Common myeloid progenitor, CD34-positive (primary cell): ENCODE measurements at regions of chr3 and their contacts with region 1.

Region 1: DNA sequence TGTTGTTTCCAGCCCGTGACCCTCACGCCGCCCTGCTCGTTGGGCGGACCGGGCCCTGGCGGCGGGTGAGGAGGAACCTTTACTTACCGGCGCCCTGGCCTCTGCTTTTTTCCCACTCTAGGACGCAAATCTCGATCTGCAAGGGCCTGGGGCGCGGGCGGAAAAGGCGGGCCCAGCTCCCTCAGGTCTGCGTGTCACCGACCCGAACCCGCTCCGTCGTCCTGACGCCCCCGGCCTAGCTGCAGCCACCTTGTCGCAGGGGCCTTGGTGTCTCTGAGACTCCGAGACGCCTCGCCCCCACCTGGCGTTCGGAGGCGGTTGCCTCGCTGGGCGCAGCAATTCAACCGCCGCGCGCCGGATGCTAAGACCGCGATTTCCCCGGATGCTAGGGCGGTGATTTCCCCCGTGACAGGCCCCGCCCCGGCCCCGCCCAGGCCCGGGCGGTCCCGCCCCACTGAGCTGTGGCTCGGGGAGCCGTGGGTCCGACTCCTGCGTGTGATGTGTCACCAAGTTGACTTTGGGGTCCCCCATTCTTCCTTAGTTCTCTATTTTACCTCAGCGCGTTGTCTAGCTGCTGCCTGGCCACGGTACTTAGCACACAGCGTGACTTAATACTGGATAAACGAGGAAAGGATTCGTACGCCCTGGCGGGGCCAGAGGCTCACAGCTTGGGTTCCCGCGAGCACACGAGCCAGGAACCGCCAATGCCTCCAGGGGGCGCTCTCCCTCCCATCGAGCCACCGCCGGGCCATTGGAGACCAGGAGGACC is at the start of gene RPL39L:
- DNase-seq: peak; percentile 86 to 97 (median 95)
- H3K4me3 ChIP-seq: peak within 1 kb of the TSS; percentile 40 to 75 (median 68)
- H3K27ac ChIP-seq: peak within 1 kb of the TSS in 1 of 2 experiments; percentile 58
- H3K4me1 ChIP-seq: peaks cover 0 to 6% (median 4%) of the 10 kb centered on the region in 4 experiments
- H3K27me3 ChIP-seq: no peaks in the 10 kb centered on the region

Region 2: GRCh38 chr3:187016639-187017345 is 122.5 kb before region 1 on chr3:
- CTCF ChIA-PET with region 1: no interaction called
- POLR2A ChIA-PET with region 1: no interaction called
- DNase-seq: no peak
- H3K4me3 ChIP-seq: no peak overlapping the region
- H3K27ac ChIP-seq: no peak overlapping the region
- H3K4me1 ChIP-seq: peaks cover 8 to 22% (median 15%) of the 10 kb centered on the region in 4 experiments
- H3K27me3 ChIP-seq: no peaks in the 10 kb centered on the region

Region 3: DNA sequence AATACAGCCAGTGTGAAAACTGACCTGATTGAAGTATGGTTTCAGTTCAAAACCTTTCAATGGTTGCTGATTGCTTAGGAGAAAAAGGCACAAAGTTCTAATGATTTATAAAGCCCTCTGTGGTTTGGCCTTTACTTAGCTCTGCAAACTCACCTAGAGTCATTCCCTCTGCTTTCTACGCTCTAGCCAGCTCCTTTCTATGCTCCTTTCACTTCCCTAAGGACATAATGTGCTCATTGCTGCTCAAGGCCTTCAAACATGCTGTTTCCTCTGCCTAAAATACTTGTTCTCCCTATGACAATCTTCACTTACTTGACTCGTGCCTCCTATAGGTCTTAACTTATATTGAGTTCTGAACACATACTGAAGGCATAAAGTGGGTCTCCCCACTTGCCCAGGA is 19.0 kb before region 1 on chr3:
- CTCF ChIA-PET with region 1: interaction called, 39 read pairs
- POLR2A ChIA-PET with region 1: interaction called, 3 read pairs
- DNase-seq: no peak
- H3K4me3 ChIP-seq: no peak overlapping the region
- H3K27ac ChIP-seq: no peak overlapping the region
- H3K4me1 ChIP-seq: no peaks in the 10 kb centered on the region
- H3K27me3 ChIP-seq: no peaks in the 10 kb centered on the region

Region 4: DNA sequence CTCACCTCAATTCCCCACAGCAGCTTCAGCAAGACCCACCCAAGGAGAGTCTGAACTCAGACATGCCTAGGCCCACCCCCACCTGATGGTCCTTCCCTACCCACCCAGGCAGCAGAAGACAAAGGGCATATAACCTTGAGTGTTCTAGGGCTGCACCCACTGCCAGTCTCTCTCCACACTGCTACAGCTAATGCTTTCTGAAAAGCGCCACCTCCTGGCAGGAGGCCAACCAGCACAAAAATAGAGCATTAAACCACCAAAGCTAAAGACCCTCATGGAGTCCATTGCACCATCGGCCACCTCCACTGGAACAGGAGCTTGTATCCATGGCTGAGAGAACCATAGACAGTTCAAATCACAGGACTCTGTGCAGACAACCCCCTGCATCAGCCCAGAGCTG is 11.3 kb after region 1 on chr3:
- CTCF ChIA-PET with region 1: interaction called, 45 read pairs
- POLR2A ChIA-PET with region 1: no interaction called
- DNase-seq: peak; percentile 38 to 65 (median 64)
- H3K4me3 ChIP-seq: no peak overlapping the region
- H3K27ac ChIP-seq: no peak overlapping the region
- H3K4me1 ChIP-seq: no peaks in the 10 kb centered on the region
- H3K27me3 ChIP-seq: no peaks in the 10 kb centered on the region

Region 5: GRCh38 chr3:187164885-187165543 is 25.7 kb after region 1 on chr3:
- CTCF ChIA-PET with region 1: interaction called, 15 read pairs
- POLR2A ChIA-PET with region 1: no interaction called
- DNase-seq: peak; percentile 70 to 88 (median 78)
- H3K4me3 ChIP-seq: no peak overlapping the region
- H3K27ac ChIP-seq: no peak overlapping the region
- H3K4me1 ChIP-seq: peaks cover 0 to under 1% (median 0%) of the 10 kb centered on the region in 4 experiments
- H3K27me3 ChIP-seq: no peaks in the 10 kb centered on the region

Region 6: DNA sequence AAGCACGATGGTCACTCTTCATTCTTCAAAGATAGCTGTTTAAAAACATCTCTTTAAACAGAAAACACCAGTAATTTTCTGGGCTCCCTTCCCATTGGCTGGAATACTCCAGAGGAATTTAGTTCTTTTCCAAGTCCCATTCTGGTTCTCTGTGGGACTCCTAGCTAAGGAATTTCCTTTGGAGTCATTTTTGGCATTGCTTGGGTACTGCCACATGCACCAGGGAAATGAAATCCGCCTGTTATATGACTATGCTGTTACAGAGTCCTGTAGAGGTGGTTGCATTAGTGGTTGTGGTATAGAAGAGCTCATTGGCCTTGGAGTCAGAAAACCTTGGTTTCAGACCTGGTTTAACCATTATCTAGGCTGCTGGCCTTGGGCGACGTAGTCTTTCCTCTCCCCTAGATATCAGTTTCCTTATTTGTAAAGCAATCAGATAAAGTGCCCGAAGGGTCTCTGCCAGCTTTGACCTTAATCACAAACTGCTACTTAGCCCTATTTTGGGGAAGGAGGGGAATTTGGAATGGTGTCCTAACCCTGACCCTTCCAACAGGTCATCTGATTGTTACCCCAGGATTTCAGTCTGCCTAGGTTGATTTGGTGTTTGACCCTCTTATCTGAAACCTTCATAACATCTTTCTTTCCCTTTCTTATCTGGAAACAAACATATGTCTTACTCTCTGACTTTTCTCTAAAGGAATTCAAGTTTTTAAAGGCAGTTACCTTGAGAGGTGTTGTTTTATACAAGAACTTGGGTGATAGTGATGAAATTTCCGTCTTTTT is 71.4 kb after region 1 on chr3:
- CTCF ChIA-PET with region 1: no interaction called
- POLR2A ChIA-PET with region 1: no interaction called
- DNase-seq: peak in 1 of 3 donors; percentile 17
- H3K4me3 ChIP-seq: no peak overlapping the region
- H3K27ac ChIP-seq: no peak overlapping the region
- H3K4me1 ChIP-seq: no peaks in the 10 kb centered on the region
- H3K27me3 ChIP-seq: peaks cover 0 to 2% (median 0%) of the 10 kb centered on the region in 5 experiments